ENCODE measurements at regions of chr13 and their contacts with region 1.

Region 1: DNA sequence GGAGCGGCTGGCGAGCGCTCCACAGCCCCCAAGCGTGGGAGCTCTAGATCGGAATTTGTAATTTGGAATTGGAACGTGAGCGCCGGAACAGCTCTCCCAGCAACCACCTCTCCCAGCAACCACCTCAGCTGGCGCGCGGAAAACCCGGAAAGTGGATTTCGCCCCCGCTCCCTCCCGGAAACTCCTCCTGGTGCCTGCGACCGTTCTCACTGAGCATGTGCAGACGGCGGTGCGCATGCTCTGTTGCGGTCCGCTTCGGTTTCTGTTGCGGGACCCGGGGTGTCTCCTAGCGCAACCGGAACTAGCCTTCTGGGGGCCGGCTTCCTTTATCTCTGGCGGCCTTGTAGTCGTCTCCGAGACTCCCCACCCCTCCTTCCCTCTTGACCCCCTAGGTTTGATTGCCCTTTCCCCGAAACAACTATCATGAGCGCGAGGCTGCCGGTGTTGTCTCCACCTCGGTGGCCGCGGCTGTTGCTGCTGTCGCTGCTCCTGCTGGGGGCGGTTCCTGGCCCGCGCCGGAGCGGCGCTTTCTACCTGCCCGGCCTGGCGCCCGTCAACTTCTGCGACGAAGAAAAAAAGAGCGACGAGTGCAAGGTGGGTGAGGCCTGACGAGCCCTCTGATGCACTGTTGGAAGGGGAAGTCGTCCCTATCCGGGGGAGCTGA is at the start of gene TM9SF2:
- DNase-seq: peak; percentile 92
- ATAC-seq: peak; percentile 61
- H3K4me3 ChIP-seq: peak within 1 kb of the TSS; percentile 72 to 89 (median 84)
- H3K27ac ChIP-seq: peak within 1 kb of the TSS; percentile 88
- H3K4me1 ChIP-seq: peaks cover 68% of the 10 kb centered on the region
- H3K27me3 ChIP-seq: no peaks in the 10 kb centered on the region; a peak in 1 of 5 replicates
- CTCF ChIP-seq: 0 out of 2 replicates have a peak, but pooled peaks have one; percentile 7
- EP300 ChIP-seq: 0 out of 4 replicates have a peak, but pooled peaks of 1 of the 2 experiments have one; percentile 40
- POLR2A ChIP-seq: peak; percentile 59 to 61
- RAD21 ChIP-seq: peak; percentile 19; the same call in 1 of the 2 replicates
- total RNA-seq, gene TM9SF2: 74.2 and 123 TPM in 2 replicates

Region 2: GRCh38 chr13:99442273-99442895 is 58.9 kb before region 1 on chr13:
- CTCF ChIA-PET with region 1: interaction called, 10 read pairs
- POLR2A ChIA-PET with region 1: no interaction called
- in situ Hi-C with region 1: loop called (anchors 5 kb)
- intact Hi-C with region 1: loop called (anchors 1 kb)
- DNase-seq: peak; percentile 35
- ATAC-seq: peak; percentile 32; the same call in 1 of the 3 replicates
- H3K4me3 ChIP-seq: no peak overlapping the region
- H3K27ac ChIP-seq: no peak overlapping the region
- H3K4me1 ChIP-seq: peaks cover 18% of the 10 kb centered on the region; the same call in 1 of the 2 replicates
- H3K27me3 ChIP-seq: peaks cover 0 to 22% of the 10 kb centered on the region in 2 experiments; a peak in 4 of 5 replicates
- CTCF ChIP-seq: peak; percentile 77
- EP300 ChIP-seq: no peak
- POLR2A ChIP-seq: no peak
- RAD21 ChIP-seq: peak; percentile 62; the same call in 1 of the 2 replicates

Region 3: GRCh38 chr13:99558570-99559180 is 57.4 kb after region 1 on chr13:
- CTCF ChIA-PET with region 1: no interaction called
- POLR2A ChIA-PET with region 1: interaction called, 5 read pairs
- in situ Hi-C with region 1: no loop called
- intact Hi-C with region 1: loop called (anchors 2 kb)
- DNase-seq: peak; percentile 54
- ATAC-seq: no peak; the same call in none of the 3 replicates
- H3K4me3 ChIP-seq: no peak overlapping the region
- H3K27ac ChIP-seq: peak overlapping the region; percentile 82
- H3K4me1 ChIP-seq: peaks cover 49% of the 10 kb centered on the region
- H3K27me3 ChIP-seq: no peaks in the 10 kb centered on the region
- CTCF ChIP-seq: no peak
- EP300 ChIP-seq: peak in 1 of 2 experiments; percentile 73; a peak in 2 of 4 replicates
- POLR2A ChIP-seq: no peak
- RAD21 ChIP-seq: no peak

Region 4: GRCh38 chr13:99606324-99607066 is 105.2 kb after region 1 on chr13:
- CTCF ChIA-PET with region 1: no interaction called
- POLR2A ChIA-PET with region 1: interaction called, 9 read pairs
- in situ Hi-C with region 1: no loop called
- intact Hi-C with region 1: loop called (anchors 1 kb)
- DNase-seq: peak; percentile 89
- ATAC-seq: peak; percentile 96
- H3K4me3 ChIP-seq: peak within 1 kb of the TSS; percentile 69 to 87 (median 69)
- H3K27ac ChIP-seq: peak within 1 kb of the TSS; percentile 96
- H3K4me1 ChIP-seq: peaks cover 31% of the 10 kb centered on the region
- H3K27me3 ChIP-seq: no peaks in the 10 kb centered on the region; a peak in 1 of 5 replicates
- CTCF ChIP-seq: peak; percentile 46
- EP300 ChIP-seq: 0 out of 4 replicates have a peak, but pooled peaks of 1 of the 2 experiments have one; percentile 17
- POLR2A ChIP-seq: peak; percentile 76 to 93
- RAD21 ChIP-seq: peak; percentile 62

Region 5: DNA sequence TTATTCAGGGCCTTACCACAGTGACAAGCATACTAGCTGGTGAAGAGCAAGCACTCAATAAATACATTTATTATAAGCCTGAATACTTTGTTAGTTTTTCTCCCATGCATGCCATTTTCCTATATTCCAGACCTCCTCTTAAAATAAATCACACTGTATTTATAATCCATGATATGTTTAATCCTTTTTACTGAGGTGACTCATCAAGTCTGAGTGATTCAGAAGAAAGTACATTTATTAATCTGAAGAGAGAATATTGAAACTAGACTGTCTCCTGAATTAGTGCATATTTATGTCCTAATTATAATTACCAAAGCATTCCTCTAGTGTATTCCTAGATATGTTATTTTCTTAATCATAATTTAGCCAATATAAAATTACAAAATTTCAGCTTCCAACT is 1591.7 kb after region 1 on chr13:
- CTCF ChIA-PET with region 1: no interaction called
- POLR2A ChIA-PET with region 1: no interaction called
- in situ Hi-C with region 1: no loop called
- intact Hi-C with region 1: no loop called
- DNase-seq: no peak
- ATAC-seq: no peak
- H3K4me3 ChIP-seq: no peak overlapping the region
- H3K27ac ChIP-seq: no peak overlapping the region
- H3K4me1 ChIP-seq: no peaks in the 10 kb centered on the region
- H3K27me3 ChIP-seq: peaks cover 3 to 20% of the 10 kb centered on the region in 2 experiments; a peak in 2 of 5 replicates
- CTCF ChIP-seq: no peak
- EP300 ChIP-seq: no peak
- POLR2A ChIP-seq: no peak
- RAD21 ChIP-seq: no peak

Measured in HepG2 (cell line).